ENCODE measurements at regions of chr14 and their contacts with region 1.

Region 1: GRCh38 chr14:78933948-78934524 is 763.9 kb downstream of the NRXN3 start:
- DNase-seq: no peak
- H3K4me3 ChIP-seq: no peak overlapping the region
- CTCF ChIP-seq: peak; percentile 27

Region 2: GRCh38 chr14:80850197-80850814 is 1916.3 kb after region 1 on chr14:
- CTCF ChIA-PET with region 1: interaction called, 14 read pairs
- POLR2A ChIA-PET with region 1: no interaction called
- DNase-seq: no peak
- H3K4me3 ChIP-seq: no peak overlapping the region
- CTCF ChIP-seq: peak; percentile 23

Region 3: DNA sequence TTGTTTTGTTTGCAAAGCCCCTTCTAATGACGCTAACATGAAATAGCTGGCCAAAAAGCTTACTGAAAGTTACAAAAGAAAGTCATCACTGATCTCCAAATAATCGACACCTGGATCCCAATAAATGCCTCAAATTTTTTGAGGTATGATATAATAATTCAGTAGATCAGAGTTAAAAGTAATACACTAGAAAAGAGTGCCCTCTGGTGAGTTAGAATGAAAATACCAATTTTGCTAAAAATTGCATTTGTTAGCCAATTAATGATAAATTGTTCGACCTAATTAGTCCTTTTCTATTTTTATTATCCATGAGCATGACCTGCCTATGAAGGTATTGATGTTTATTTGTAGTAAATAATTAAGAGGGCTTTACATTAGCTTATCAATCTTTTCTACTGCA is 1928.9 kb after region 1 on chr14:
- CTCF ChIA-PET with region 1: interaction called, 20 read pairs
- POLR2A ChIA-PET with region 1: no interaction called
- DNase-seq: no peak
- H3K4me3 ChIP-seq: no peak overlapping the region
- CTCF ChIP-seq: no peak

Measured in AG04449 (cell line).